ENCODE measurements at regions of chr7 and their contacts with region 1.

Region 1: DNA sequence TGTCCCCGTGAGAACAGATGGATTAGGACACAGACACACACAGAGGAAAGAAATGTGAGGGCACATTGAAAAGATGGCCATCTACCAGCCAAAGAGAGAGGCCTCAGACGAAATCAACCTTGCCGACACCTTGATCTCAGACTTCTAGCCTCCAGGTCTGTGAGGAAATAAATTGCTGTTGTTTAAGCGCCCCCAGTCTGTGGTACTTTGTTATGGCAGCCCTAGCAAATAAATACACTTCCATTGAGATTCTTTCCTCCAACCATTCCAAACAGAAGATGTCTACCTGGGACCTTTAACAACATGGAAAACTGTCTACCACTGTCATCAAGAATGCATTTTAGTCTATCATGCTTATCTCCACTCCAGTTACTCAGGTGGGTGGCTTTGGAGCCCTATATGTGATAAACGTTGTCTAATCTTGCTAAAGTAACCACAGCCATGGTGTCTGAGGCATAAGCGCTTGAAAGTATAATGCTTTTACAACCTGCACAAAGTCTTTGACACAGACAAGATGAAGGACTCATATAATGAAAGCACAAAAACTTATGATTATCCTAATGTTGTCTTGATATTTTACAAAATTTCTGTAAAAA is 244.3 kb downstream of the MTERF1 start:
- DNase-seq: peak; percentile 67
- H3K4me3 ChIP-seq: no peak overlapping the region
- H3K27ac ChIP-seq: no peak overlapping the region
- H3K4me1 ChIP-seq: peaks cover 29% of the 10 kb centered on the region
- H3K27me3 ChIP-seq: no peaks in the 10 kb centered on the region
- CTCF ChIP-seq: peak; percentile 82

Region 2: DNA sequence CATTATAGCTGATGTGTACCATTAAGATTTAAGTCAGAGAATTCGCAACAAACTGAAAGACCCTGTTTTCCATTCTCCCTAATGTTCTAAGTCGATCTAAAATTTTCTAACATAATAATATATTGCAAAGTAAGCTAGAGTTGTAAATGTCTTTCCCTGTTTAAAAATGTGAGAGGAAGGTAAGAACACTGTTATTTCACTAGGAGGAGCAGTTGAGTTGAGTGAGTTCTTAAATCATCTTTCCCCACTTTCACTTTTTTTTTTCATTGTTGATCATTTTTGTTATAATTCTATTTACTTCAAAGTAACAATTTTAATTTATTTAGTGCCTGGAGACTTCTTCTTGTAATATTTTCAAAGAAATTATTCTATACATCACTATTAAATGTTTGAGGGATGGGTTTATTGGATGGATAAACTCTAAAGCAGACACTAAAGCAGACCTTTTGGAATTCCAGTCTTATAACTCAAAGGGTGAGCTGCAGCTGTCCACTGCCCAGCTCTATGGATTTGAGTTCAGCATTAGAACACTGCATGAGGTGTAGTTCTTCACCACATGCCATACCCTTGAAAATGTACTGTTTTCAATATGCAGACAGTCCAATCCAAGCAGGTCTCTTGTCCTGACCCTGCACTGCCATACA is 553.3 kb before region 1 on chr7:
- CTCF ChIA-PET with region 1: no interaction called
- POLR2A ChIA-PET with region 1: no interaction called
- intact Hi-C with region 1: loop called (anchors 5 kb)
- DNase-seq: peak; percentile 62
- H3K4me3 ChIP-seq: no peak overlapping the region
- H3K27ac ChIP-seq: peak overlapping the region; percentile 69
- H3K4me1 ChIP-seq: peaks cover 91% of the 10 kb centered on the region
- H3K27me3 ChIP-seq: no peaks in the 10 kb centered on the region
- CTCF ChIP-seq: peak; percentile 76

Region 3: GRCh38 chr7:91264046-91264923 is 371.9 kb before region 1 on chr7 and contains the start of gene FZD1:
- CTCF ChIA-PET with region 1: no interaction called
- POLR2A ChIA-PET with region 1: no interaction called
- intact Hi-C with region 1: loop called (anchors 5 kb)
- DNase-seq: peak; percentile 100
- H3K4me3 ChIP-seq: peak within 1 kb of the TSS; percentile 92
- H3K27ac ChIP-seq: peak within 1 kb of the TSS; percentile 97
- H3K4me1 ChIP-seq: peaks cover 21% of the 10 kb centered on the region
- H3K27me3 ChIP-seq: no peaks in the 10 kb centered on the region
- CTCF ChIP-seq: no peak
- total RNA-seq, gene FZD1: 47.6 and 49.9 TPM in 2 replicates

Region 4: DNA sequence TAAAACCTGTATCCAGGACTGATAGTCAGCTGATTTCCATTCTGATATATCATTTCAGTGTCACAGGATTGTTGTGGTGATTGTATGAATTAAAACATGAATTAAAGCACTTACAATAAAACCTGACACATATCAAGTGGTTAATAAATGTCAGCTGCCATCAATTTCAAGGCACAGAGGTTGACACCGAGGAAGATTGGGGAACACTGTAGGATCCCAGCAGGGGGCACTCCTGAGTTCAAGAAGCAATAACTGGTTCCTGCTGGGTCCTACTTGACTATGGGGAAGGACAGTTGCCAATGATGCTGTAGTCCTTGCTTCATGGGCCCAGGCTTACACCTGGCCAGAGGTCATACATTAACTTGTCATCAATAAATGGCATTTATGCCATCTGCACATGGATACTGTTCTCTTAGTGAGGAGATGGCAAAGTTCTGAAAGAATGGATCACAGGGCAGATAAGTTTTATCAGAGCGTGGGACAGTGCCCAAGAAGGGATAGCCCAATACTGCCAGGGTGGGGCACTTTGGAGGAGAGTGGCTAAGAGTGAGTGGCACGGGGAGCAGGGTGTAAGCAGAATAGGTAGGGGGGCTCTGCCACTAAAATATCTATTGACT is 347.9 kb before region 1 on chr7:
- CTCF ChIA-PET with region 1: no interaction called
- POLR2A ChIA-PET with region 1: no interaction called
- intact Hi-C with region 1: loop called (anchors 5 kb)
- DNase-seq: peak; percentile 71
- H3K4me3 ChIP-seq: no peak overlapping the region
- H3K27ac ChIP-seq: peak overlapping the region; percentile 58
- H3K4me1 ChIP-seq: peaks cover 39% of the 10 kb centered on the region
- H3K27me3 ChIP-seq: no peaks in the 10 kb centered on the region
- CTCF ChIP-seq: peak; percentile 52

Region 5: DNA sequence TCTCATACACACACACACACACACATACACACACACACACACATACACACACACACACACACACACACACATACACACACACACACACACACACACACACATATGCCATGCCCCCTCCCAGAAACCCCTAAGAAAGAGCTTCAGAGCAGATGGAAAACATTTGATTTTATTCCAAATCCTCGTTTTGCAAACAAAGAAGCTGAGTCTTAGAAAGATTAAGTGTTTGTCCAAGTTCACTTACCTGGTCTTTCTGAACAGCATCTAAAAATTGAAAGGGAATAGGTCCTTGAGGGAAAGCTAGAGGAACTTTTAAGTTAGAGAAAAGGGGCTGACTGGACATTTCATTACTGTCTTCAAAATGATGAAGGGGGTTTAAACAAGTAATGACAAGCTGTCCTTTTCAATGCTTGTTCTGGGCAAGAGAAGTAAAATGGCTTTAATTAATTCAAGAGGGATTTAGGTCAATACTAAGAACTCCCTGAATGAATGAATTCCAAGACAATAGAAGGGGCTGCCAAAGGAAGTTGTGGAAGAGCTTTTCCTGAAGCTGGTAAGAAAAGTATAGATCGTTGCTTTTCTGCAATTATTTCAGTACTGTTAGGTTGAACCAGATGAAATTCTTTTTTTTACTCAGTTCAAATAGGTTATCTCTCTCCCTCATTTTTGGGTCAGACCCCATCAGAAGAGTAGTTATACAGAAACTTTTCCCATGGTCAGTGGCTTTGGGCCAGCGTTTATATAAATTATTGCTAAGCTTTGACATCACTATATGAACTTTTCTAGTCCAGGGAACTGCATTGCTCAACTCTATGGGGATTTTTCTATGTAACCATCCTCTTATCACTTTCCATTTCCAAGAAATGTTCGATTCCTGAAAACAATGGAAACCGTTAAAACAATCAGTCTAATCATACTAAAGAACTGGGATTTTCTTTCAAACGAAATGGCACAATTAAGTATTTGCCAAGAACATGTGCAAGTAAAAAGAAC is 17.2 kb before region 1 on chr7:
- CTCF ChIA-PET with region 1: no interaction called
- POLR2A ChIA-PET with region 1: no interaction called
- intact Hi-C with region 1: no loop called
- DNase-seq: no peak
- H3K4me3 ChIP-seq: no peak overlapping the region
- H3K27ac ChIP-seq: no peak overlapping the region
- H3K4me1 ChIP-seq: peaks cover 7% of the 10 kb centered on the region
- H3K27me3 ChIP-seq: no peaks in the 10 kb centered on the region
- CTCF ChIP-seq: no peak

Region 6: DNA sequence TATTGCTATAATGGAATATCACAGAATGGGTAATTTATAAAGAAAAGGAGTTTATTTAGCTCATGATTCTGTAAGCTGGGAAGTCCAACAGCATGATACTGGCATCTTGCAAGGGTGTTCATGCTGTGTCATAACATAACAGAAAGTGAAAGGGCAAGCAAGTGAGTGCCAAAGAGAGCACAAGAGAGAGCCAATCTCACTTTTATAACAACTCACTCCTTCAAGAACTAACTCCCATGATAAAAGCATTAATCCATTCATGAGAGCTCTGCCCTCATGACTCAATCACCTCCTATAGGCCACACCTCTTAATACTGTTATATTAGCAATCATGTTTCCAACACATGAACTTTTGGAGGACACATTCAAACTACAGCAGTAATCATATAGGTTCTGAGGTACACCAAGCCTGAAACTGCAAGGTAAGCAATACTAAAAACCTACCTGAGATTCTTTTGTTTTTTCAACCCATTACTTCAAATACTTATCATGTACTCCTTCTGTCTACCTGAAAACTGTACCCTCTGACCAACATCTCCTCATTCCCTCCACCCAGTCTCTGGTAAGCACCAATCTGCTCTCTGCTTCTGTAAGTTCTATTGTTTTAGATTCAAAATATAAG is 24.6 kb after region 1 on chr7:
- CTCF ChIA-PET with region 1: no interaction called
- POLR2A ChIA-PET with region 1: no interaction called
- intact Hi-C with region 1: no loop called
- DNase-seq: no peak
- H3K4me3 ChIP-seq: no peak overlapping the region
- H3K27ac ChIP-seq: no peak overlapping the region
- H3K4me1 ChIP-seq: peaks cover 21% of the 10 kb centered on the region
- H3K27me3 ChIP-seq: no peaks in the 10 kb centered on the region
- CTCF ChIP-seq: no peak

Measured in A673 (cell line).